A673 (cell line): ENCODE measurements at regions of chr5 and their contacts with region 1.

Region 1: GRCh38 chr5:154972476-154973080 is 31.7 kb downstream of the MRPL22 start:
- DNase-seq: peak; percentile 72
- H3K4me3 ChIP-seq: no peak overlapping the region
- H3K27ac ChIP-seq: peak overlapping the region; percentile 64
- H3K4me1 ChIP-seq: peaks cover 34% of the 10 kb centered on the region
- H3K27me3 ChIP-seq: no peaks in the 10 kb centered on the region
- CTCF ChIP-seq: peak; percentile 70

Region 2: DNA sequence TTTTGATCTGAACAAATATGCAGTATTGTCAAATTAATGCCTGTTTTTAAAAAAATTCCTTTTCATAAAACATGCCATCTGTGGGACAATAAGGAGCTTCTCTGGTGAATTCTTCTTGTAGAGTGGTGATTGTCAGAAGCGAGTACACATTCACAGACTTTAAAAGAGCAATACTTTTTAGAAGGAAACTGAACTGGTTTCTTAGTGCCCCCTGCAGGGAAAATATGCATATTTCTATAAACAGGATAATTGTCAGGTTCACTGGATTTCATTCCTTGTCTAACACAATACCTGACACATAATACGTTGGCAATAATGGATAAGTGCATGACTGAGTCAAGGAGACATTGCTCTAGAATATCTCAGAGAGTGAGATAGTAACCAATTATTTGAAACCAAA is 174.6 kb after region 1 on chr5:
- CTCF ChIA-PET with region 1: no interaction called
- POLR2A ChIA-PET with region 1: no interaction called
- intact Hi-C with region 1: loop called (anchors 5 kb)
- DNase-seq: peak; percentile 40
- H3K4me3 ChIP-seq: no peak overlapping the region
- H3K27ac ChIP-seq: no peak overlapping the region
- H3K4me1 ChIP-seq: peaks cover 6% of the 10 kb centered on the region
- H3K27me3 ChIP-seq: no peaks in the 10 kb centered on the region
- CTCF ChIP-seq: peak; percentile 40; the same call in 1 of the 2 replicates

Region 3: GRCh38 chr5:155260798-155261197 is 288.2 kb after region 1 on chr5:
- CTCF ChIA-PET with region 1: interaction called, 4 read pairs
- POLR2A ChIA-PET with region 1: no interaction called
- intact Hi-C with region 1: loop called (anchors 5 kb)
- DNase-seq: peak; percentile 53
- H3K4me3 ChIP-seq: no peak overlapping the region
- H3K27ac ChIP-seq: no peak overlapping the region
- H3K4me1 ChIP-seq: no peaks in the 10 kb centered on the region
- H3K27me3 ChIP-seq: no peaks in the 10 kb centered on the region
- CTCF ChIP-seq: peak; percentile 48